Lower leg skin (tissue), 4 donors: ENCODE measurements at regions of chr16 and their contacts with region 1.

Region 1: GRCh38 chr16:25051406-25052150 is 36.4 kb upstream of the ARHGAP17 start:
- DNase-seq: no peak
- H3K4me3 ChIP-seq: no peak overlapping the region
- CTCF ChIP-seq: no peak
- POLR2A ChIP-seq: no peak

Region 2: GRCh38 chr16:25126820-25127232 is 75.2 kb after region 1 on chr16:
- intact Hi-C with region 1: loop called (anchors 10 kb)
- DNase-seq: no peak
- H3K4me3 ChIP-seq: no peak overlapping the region
- CTCF ChIP-seq: no peak
- POLR2A ChIP-seq: no peak

Region 3: DNA sequence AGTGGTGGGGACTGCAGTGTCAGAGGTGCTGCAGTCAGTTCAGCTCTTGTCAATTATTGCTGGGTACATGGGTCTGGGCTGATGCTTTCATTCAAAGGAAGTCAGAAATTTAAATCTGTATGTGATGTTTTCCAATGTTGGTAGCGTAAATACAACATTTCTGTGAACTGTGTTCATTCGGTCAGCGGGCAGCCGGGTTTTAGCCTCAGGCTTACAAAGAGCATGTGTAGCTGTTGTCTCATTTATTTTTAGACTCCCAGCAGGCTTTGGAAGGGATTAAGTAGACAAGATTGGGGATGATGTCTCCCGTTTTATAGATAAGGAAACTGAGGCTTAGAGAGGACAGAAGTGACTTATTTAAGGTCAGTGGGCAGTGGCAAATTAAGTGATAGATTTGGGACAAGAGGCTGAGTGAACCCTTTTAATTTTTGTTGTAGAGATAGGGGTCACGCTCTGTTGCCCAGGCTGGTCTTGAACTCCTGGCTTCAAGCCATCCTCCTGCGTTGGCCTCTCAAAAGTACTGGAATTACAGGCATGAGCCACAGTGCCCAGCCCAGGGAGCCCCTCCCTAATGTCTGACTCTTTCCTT is 173.2 kb after region 1 on chr16:
- intact Hi-C with region 1: loop called (anchors 5 kb)
- DNase-seq: no peak
- H3K4me3 ChIP-seq: no peak overlapping the region
- CTCF ChIP-seq: no peak
- POLR2A ChIP-seq: no peak